ENCODE measurements at regions of chr22 and their contacts with region 1.

Region 1: DNA sequence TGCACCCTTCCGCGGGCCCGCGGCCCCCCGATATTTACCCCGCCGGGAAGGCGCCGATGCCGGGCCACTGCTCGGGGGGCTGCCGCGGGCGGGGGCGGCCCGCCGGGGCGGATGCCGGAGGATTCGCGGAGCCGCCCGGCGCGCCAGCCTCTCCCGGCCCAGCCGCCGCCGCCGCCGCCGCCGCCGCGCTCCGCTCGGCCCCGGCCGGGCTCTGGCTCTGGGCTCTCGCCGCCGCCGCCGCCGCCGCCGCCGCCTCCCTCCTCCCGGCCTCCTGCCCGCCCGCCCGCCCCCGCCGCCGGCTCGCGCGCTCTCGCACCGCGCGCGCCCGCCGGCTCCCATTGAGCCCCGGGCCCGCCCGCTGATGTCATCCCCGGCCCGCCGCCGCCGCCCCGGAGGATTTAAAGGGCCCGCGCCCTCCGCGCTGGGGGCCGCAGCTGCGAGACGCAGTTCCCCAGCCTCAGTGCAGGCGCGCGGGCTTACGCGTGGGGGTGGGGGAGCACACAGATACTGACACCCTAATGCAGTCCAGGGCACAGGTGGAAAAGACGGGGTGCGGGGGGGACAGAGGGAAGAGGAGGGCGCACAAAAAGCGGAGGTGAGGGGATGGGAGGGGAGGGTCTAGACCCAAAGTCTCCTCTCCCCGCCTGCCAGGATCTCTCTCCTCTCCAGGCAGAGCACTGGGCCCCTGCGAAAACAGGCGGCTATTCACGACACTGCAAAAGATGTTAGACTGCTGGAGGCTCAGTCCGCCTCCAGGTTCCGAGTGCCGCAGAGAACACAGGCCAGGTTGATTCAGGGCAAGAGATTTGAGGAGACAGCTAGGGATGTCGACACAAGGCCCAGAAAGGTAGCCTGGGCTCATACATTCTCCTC is at the start of gene CSNK1E:
- DNase-seq: peak; percentile 77
- H3K4me3 Mint-ChIP-seq: peak within 1 kb of the TSS; percentile 85
- H3K27ac Mint-ChIP-seq: peak within 1 kb of the TSS; percentile 81
- H3K4me1 Mint-ChIP-seq: peaks cover 44% of the 10 kb centered on the region
- H3K27me3 Mint-ChIP-seq: no peaks in the 10 kb centered on the region
- total RNA-seq, gene CSNK1E: 104 to 105 TPM

Region 2: DNA sequence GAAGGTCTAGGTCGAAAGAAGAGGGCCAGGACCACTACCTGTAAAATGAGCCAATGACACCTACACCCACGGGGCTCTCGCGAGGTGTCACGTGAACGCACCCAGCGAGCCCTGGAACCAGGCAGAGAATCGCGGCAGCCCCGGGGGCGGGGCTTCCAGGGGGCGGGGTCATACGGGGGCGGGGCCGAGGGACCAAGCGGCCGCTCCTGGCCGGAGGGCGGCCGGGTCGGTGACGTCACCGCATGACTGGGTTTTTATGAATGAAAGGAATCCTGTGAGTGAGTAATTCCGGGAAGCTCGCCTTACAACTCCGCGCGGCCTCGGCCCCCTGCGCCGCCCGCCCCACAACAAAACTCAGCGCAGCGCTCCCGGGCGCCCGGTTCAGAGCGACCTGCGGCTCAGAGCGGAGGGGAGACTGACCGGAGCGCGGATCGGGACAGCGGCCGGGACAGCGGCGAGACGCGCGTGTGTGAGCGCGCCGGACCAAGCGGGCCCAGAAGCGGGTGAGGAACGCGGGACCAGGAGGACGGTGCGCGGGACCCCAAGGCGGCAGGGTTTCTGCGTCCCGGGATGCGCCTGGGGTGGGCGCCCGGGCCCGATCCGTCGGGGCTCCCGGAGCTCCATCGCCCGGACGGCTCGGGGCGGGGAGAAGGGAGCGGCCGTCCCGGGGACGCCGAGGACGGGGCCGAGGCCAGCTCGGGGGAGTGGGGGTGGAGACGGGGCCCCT is 115.5 kb before region 1 on chr22 and contains the start of gene MAFF:
- CTCF ChIA-PET with region 1: no interaction called
- POLR2A ChIA-PET with region 1: no interaction called
- intact Hi-C with region 1: loop called (anchors 5 kb)
- DNase-seq: peak; percentile 98
- H3K4me3 Mint-ChIP-seq: peak within 1 kb of the TSS; percentile 83
- H3K27ac Mint-ChIP-seq: peak within 1 kb of the TSS; percentile 84
- H3K4me1 Mint-ChIP-seq: peaks cover 37% of the 10 kb centered on the region
- H3K27me3 Mint-ChIP-seq: no peaks in the 10 kb centered on the region
- total RNA-seq, gene MAFF: 15.5 to 15.9 TPM

Region 3: GRCh38 chr22:38272373-38273134 is 44.8 kb before region 1 on chr22 and contains the start of gene TMEM184B:
- CTCF ChIA-PET with region 1: no interaction called
- POLR2A ChIA-PET with region 1: interaction called, 3 read pairs
- intact Hi-C with region 1: loop called (anchors 2 kb)
- DNase-seq: peak; percentile 84
- H3K4me3 Mint-ChIP-seq: peak within 1 kb of the TSS; percentile 85
- H3K27ac Mint-ChIP-seq: peak within 1 kb of the TSS; percentile 87
- H3K4me1 Mint-ChIP-seq: peaks cover 42% of the 10 kb centered on the region
- H3K27me3 Mint-ChIP-seq: no peaks in the 10 kb centered on the region
- total RNA-seq, gene TMEM184B: 24.4 to 26.6 TPM

Region 4: GRCh38 chr22:38305471-38306448 is 11.6 kb before region 1 on chr22:
- CTCF ChIA-PET with region 1: interaction called, 5 read pairs
- POLR2A ChIA-PET with region 1: interaction called, 17 read pairs
- intact Hi-C with region 1: loop called (anchors 1 kb)
- DNase-seq: peak; percentile 73
- H3K4me3 Mint-ChIP-seq: peak overlapping the region; percentile 53
- H3K27ac Mint-ChIP-seq: peak overlapping the region; percentile 91
- H3K4me1 Mint-ChIP-seq: peaks cover 34% of the 10 kb centered on the region
- H3K27me3 Mint-ChIP-seq: no peaks in the 10 kb centered on the region

Region 5: GRCh38 chr22:38353142-38353629 is 35.8 kb after region 1 on chr22:
- CTCF ChIA-PET with region 1: no interaction called
- POLR2A ChIA-PET with region 1: no interaction called
- intact Hi-C with region 1: loop called (anchors 5 kb)
- DNase-seq: peak; percentile 76
- H3K4me3 Mint-ChIP-seq: no peak overlapping the region
- H3K27ac Mint-ChIP-seq: no peak overlapping the region
- H3K4me1 Mint-ChIP-seq: no peaks in the 10 kb centered on the region
- H3K27me3 Mint-ChIP-seq: no peaks in the 10 kb centered on the region

Region 6: DNA sequence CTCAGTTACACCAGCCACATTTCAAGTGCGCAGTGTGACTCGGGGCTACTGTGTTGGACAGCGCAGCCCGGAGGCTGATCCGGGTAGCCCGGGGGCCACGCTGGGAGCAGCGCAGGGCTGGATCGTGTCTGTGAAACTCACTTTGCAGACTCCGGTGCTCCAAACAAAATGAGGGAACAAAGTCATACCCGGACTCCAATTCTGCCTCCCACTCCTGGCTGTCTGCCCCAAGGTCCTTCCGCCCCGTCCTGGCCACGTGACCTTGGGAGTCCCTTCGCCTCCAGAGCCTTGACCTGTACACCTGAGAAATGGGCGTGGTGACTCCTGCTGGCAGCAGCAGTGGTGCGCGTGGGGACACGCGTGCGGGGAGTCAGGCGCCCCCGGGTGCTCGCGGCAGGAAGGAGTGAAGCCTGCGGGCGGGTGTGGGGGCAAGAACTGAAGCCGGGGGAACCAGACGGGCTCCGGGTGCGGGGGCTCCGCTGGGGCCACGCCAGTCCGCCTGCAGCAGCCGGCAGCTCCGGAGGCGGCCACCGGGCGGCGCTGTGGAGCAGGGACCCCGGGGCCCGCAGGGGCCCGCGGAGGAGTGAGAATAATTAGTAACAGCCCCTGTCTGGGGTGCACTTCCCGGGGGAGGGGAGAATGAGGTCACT is 95.2 kb after region 1 on chr22:
- CTCF ChIA-PET with region 1: no interaction called
- POLR2A ChIA-PET with region 1: no interaction called
- intact Hi-C with region 1: no loop called
- DNase-seq: peak; percentile 59
- H3K4me3 Mint-ChIP-seq: no peak overlapping the region
- H3K27ac Mint-ChIP-seq: no peak overlapping the region
- H3K4me1 Mint-ChIP-seq: peaks cover 3% of the 10 kb centered on the region
- H3K27me3 Mint-ChIP-seq: peaks cover 7% of the 10 kb centered on the region

Measured in activated CD4-positive, alpha-beta memory T cell treated with anti-CD3 and anti-CD28 coated beads for 36 hours (primary cell).